GM10248 (cell line): ENCODE measurements at regions of chr19 and their contacts with region 1.

Region 1: DNA sequence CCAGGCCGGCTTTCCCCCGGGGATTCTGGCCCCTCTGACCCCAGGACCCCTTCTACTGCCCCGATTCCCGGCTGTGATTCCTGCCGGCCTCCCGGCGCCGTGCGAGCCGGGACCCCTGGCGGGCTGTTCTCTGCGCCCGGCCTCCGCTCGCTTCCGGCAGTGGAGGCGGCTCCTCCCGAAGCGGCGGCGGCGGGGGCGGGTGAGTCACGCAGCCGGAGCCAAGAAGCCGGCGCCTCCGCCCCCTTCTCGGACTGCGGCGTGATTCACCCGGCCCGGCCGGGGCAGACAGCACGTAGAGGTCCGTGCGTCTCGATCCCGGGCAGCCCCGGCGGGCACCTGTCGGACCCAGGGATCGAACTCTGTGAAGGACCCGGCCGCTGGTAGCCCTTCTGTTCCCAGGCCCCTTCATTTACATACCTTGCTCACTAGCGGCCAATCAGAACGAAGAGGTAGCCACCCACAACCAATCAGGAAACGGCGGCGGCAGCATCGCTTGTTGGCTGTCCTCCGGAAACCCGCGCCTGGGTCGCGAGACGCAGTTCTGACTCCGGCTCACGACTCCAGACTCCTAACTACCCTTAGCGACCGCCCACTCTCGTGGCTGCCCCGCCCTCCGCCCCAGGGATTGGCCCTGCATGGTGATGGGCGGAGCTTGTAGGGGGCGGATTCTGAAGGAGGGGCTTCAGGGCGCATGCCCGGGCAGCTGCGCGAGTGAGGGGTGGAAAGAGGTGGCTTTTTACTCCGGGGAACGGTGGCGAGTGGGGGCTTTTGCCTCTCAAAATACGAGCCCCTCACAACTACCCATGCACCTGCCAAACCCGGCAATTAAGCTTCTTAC is at the start of gene SERTAD1:
- DNase-seq: peak; percentile 99
- CTCF ChIP-seq: peak; percentile 59

Region 2: DNA sequence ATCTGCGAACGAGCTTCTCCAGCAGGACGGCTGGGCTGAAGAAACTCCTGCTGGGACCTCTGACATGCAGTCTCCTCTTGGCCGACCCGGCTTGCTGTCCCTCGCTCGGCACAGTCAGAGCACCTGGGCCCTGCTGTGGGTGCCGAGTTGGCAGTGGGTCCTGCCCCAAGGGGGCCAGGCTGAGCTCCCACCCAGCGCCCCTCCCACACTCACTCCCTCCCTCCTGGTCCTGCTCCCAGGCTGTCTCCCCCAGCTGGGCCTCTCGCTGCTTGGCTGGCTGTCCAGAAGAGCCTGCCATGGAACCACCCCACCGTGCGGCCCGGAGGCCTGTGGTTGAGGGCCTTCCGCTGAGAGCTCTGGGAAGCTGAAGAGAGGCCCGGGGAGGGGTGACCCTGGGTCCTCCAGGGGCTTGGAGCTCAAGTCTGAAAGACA is 146.5 kb before region 1 on chr19:
- CTCF ChIA-PET with region 1: no interaction called
- POLR2A ChIA-PET with region 1: interaction called, 12 read pairs
- DNase-seq: no peak
- CTCF ChIP-seq: no peak

Region 3: GRCh38 chr19:40403262-40403984 is 22.2 kb before region 1 on chr19:
- CTCF ChIA-PET with region 1: interaction called, 30 read pairs
- POLR2A ChIA-PET with region 1: interaction called, 6 read pairs
- DNase-seq: peak; percentile 98
- CTCF ChIP-seq: no peak

Region 4: GRCh38 chr19:40411125-40411842 is 14.4 kb before region 1 on chr19:
- CTCF ChIA-PET with region 1: interaction called, 35 read pairs
- POLR2A ChIA-PET with region 1: interaction called, 4 read pairs
- DNase-seq: no peak
- CTCF ChIP-seq: no peak

Region 5: DNA sequence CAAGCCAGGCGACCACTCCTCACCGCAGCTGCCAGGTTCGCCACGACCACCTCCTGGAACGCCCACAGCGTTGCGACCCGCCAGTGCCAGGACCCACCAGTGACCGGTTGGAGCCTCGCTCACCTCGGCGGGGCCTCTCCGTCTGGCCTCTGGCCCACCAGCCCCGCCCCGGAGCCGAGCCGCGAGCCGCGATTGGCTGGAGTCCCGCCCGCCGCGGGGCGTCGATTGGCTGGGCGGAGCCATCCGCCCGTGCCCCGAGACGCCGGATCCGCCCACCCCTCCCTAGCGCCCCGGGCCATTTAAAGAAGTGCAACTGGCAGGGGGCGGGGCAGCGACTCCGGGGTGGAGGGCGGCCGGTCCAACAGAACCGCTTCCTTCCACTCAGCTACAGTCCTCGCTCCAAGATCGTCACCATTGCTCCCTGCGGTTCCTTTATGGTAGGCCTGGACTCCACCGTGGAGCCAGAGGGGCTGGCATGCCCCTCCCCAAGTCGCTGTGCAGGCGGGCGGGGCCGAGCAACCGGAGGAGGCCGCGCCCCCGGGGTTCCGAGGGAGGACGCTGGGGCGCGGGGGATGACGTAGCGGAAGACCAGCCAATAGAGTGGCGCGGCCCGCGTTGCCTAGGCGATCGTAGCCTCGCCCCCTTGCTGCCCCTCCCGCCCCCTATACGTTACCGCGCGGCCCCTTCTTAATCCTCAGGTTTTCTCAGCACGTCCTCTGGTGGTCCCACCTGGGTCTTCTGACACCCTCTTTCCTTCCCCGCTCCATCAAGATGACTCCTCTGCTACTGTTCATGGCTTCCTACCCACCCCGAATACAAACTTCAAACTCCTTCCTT is 18.7 kb after region 1 on chr19 and contains the start of gene SERTAD3:
- CTCF ChIA-PET with region 1: interaction called, 27 read pairs
- POLR2A ChIA-PET with region 1: interaction called, 28 read pairs
- DNase-seq: peak; percentile 98
- CTCF ChIP-seq: peak; percentile 60

Region 6: DNA sequence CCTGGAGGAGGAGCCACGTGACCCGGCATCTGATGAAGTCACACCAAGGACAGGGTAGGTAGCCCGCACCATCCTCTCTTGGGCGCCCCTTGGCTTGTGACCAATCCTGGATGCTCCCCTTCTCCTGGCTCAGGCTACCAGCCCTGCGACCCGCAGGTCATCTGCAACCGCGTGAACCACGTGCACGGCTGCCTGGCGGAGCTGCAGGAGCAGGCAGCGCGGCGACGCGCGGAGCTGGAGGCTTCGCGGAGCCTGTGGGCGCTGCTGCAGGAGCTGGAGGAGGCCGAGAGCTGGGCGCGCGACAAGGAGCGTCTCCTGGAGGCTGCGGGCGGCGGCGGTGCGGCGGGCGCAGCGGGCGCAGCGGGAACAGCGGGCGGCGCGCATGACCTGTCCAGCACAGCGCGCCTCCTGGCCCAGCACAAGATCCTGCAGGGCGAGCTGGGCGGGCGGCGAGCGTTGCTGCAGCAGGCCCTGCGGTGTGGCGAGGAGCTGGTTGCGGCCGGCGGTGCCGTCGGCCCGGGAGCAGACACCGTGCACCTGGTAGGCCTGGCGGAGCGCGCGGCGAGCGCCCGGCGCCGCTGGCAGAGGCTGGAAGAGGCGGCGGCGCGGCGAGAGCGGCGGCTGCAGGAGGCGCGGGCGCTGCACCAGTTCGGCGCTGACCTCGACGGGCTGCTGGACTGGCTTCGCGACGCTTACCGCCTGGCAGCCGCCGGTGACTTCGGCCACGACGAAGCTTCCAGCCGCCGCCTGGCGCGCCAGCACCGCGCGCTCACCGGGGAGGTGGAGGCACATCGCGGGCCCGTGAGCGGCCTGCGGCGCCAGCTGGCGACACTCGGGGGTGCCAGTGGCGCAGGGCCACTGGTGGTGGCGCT is 87.0 kb after region 1 on chr19:
- CTCF ChIA-PET with region 1: no interaction called
- POLR2A ChIA-PET with region 1: no interaction called
- DNase-seq: no peak
- CTCF ChIP-seq: no peak